Testis (tissue), 5 donors: ENCODE measurements at regions of chr1 and their contacts with region 1.

Region 1: GRCh38 chr1:163174524-163175437 is 27.9 kb downstream of the RGS5 start:
- DNase-seq: peak; percentile 79
- H3K4me3 ChIP-seq: peak overlapping the region in 1 of 2 donors; percentile 5
- H3K27ac ChIP-seq: no peak overlapping the region
- H3K4me1 ChIP-seq: peaks cover 8% of the 10 kb centered on the region
- H3K27me3 ChIP-seq: no peaks in the 10 kb centered on the region
- CTCF ChIP-seq: peak; percentile 67 to 82 (median 80)
- POLR2A ChIP-seq: no peak

Region 2: GRCh38 chr1:163071405-163072255 is 103.2 kb before region 1 on chr1:
- intact Hi-C with region 1: loop called (anchors 10 kb)
- DNase-seq: peak; percentile 82
- H3K4me3 ChIP-seq: no peak overlapping the region
- H3K27ac ChIP-seq: no peak overlapping the region
- H3K4me1 ChIP-seq: no peaks in the 10 kb centered on the region
- H3K27me3 ChIP-seq: no peaks in the 10 kb centered on the region
- CTCF ChIP-seq: peak; percentile 45 to 70 (median 53)
- POLR2A ChIP-seq: no peak